Activated CD8-positive, alpha-beta T cell treated with anti-CD3 and anti-CD28 coated beads for 36 hours (primary cell): ENCODE measurements at regions of chr12 and their contacts with region 1.

Region 1: DNA sequence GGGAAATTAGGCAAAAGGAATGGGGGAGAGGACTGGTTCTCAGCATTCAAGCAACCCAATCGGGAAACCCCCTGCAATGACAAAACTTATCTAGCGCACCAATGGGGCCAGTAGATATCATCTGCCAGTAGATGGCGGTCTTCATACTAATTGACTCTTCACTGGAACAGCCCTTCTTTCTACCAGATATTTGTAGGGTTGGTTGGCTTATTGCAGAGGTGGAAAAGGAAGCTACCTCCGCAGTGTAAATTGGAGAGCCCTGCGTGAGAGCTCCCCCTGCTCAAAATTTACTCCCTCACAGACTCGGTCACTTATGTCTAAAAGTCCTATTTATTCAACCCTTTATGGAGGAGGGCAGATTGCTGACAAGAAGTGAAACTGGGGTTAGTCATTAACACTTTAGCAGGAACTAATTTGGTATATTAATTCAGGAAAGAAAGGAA is 166.1 kb upstream of the CCND2 start:
- DNase-seq: peak; percentile 88
- ATAC-seq: peak; percentile 92
- H3K4me3 Mint-ChIP-seq: peak overlapping the region; percentile 44
- H3K27ac Mint-ChIP-seq: peak overlapping the region; percentile 90
- H3K4me1 Mint-ChIP-seq: peaks cover 39% of the 10 kb centered on the region
- H3K27me3 Mint-ChIP-seq: peaks cover 2% of the 10 kb centered on the region
- CTCF ChIP-seq: peak; percentile 68

Region 2: DNA sequence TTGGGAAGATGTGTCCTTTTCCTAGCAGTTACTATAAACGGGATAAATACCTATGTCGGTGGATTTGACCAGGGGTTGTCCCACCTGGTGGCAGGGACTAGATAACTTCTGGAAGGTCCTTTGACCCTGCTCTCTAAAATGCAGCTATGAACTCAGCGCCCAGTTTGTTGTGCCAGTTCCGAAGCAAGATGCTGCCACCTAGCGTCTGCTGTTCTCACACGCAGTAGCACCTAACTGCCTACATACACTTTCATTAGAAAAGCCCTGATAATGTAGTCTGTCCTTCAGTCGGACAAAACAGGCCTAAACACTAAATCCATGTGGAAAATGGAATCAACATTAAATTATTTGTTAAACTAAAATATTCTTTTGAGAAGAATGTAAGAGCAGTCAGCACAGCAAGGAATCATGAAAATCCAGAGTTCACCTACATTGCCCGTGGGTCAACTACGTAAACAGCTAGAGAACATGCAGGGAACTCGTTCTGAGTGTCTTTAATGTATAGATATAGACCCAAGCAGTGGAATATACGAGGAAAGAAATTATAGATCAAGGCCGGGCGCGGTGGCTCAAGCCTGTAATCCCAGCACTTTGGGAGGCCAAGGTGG is 303.5 kb before region 1 on chr12:
- CTCF ChIA-PET with region 1: no interaction called
- POLR2A ChIA-PET with region 1: no interaction called
- intact Hi-C with region 1: no loop called
- DNase-seq: peak; percentile 86
- ATAC-seq: peak; percentile 74
- H3K4me3 Mint-ChIP-seq: no peak overlapping the region
- H3K27ac Mint-ChIP-seq: no peak overlapping the region
- H3K4me1 Mint-ChIP-seq: peaks cover 10% of the 10 kb centered on the region
- H3K27me3 Mint-ChIP-seq: no peaks in the 10 kb centered on the region
- CTCF ChIP-seq: peak; percentile 92

Region 3: GRCh38 chr12:4091016-4091743 is 16.3 kb before region 1 on chr12:
- CTCF ChIA-PET with region 1: interaction called, 12 read pairs
- POLR2A ChIA-PET with region 1: interaction called, 3 read pairs
- intact Hi-C with region 1: no loop called
- DNase-seq: no peak
- ATAC-seq: no peak
- H3K4me3 Mint-ChIP-seq: no peak overlapping the region
- H3K27ac Mint-ChIP-seq: no peak overlapping the region
- H3K4me1 Mint-ChIP-seq: peaks cover 10% of the 10 kb centered on the region
- H3K27me3 Mint-ChIP-seq: peaks cover 3% of the 10 kb centered on the region
- CTCF ChIP-seq: no peak

Region 4: GRCh38 chr12:4148418-4149056 is 41.1 kb after region 1 on chr12:
- CTCF ChIA-PET with region 1: interaction called, 5 read pairs
- POLR2A ChIA-PET with region 1: interaction called, 11 read pairs
- intact Hi-C with region 1: loop called (anchors 5 kb)
- DNase-seq: peak; percentile 80
- ATAC-seq: peak; percentile 7
- H3K4me3 Mint-ChIP-seq: no peak overlapping the region
- H3K27ac Mint-ChIP-seq: peak overlapping the region; percentile 90
- H3K4me1 Mint-ChIP-seq: peaks cover 87% of the 10 kb centered on the region
- H3K27me3 Mint-ChIP-seq: no peaks in the 10 kb centered on the region
- CTCF ChIP-seq: no peak

Region 5: DNA sequence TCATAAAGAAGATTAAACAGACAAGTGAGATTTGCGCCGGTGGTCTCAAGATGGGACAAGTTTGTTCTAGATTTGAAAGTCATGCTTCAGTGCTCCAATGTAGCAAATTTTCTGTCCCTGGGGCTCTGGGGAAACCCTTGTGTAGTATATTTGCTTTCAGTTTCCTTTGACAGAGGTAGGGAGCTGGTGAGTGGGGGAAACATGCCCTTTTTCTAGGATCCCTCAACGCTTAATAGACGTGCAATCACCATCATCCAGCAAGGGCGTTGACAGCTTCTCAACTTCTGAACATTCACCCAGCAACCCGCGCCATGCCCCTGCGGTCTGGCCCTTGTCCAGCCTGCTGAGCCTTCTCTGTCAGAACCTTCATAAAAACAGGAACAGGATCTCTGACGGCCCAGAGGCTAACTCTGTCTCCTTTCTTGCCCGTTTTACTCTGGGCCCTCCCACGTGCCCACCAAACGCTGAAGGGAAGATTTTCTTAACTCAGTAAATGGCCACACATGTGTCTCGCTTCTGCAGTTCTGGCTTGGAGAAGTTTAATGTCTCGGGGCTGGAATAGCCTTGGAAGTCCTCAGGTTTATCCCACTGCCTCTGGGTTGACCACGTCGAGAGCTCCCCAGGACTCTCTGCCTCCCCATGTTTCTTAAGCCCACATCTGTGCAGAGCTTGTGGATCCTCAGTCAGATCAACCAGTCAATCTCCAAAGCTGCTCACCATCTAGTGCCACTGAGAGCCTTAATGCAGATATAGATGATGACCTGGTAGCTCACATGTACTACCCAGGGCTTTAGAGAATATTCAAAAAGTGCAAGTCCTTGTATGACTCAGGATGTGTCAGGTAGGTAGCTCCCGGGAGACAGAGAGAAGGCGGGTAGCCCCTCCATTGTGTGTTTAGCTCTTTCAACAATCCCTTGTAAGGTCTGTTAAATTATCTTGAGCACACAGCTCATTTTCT is 108.1 kb after region 1 on chr12:
- CTCF ChIA-PET with region 1: interaction called, 10 read pairs
- POLR2A ChIA-PET with region 1: interaction called, 5 read pairs
- intact Hi-C with region 1: no loop called
- DNase-seq: peak; percentile 73
- ATAC-seq: peak; percentile 82
- H3K4me3 Mint-ChIP-seq: peak overlapping the region; percentile 50
- H3K27ac Mint-ChIP-seq: peak overlapping the region; percentile 86
- H3K4me1 Mint-ChIP-seq: peaks cover 37% of the 10 kb centered on the region
- H3K27me3 Mint-ChIP-seq: no peaks in the 10 kb centered on the region
- CTCF ChIP-seq: no peak

Region 6: GRCh38 chr12:4293299-4293965 is 186.0 kb after region 1 on chr12:
- CTCF ChIA-PET with region 1: interaction called, 10 read pairs
- POLR2A ChIA-PET with region 1: interaction called, 4 read pairs
- intact Hi-C with region 1: no loop called
- DNase-seq: peak; percentile 76
- ATAC-seq: peak; percentile 81
- H3K4me3 Mint-ChIP-seq: peak overlapping the region; percentile 55
- H3K27ac Mint-ChIP-seq: peak overlapping the region; percentile 94
- H3K4me1 Mint-ChIP-seq: peaks cover 74% of the 10 kb centered on the region
- H3K27me3 Mint-ChIP-seq: no peaks in the 10 kb centered on the region
- CTCF ChIP-seq: no peak